K562 (cell line): ENCODE measurements at regions of chr3 and their contacts with region 1.

Region 1: GRCh38 chr3:184174646-184175492 is at the start of gene AP2M1:
- DNase-seq: peak; percentile 86 to 98 (median 92)
- ATAC-seq: peak; percentile 88
- H3K4me3 ChIP-seq: peak within 1 kb of the TSS; percentile 81
- H3K27ac ChIP-seq: peak within 1 kb of the TSS; percentile 82
- H3K4me1 ChIP-seq: peaks cover 41 to 56% of the 10 kb centered on the region in 2 experiments; a peak in 4 of 5 replicates
- H3K27me3 ChIP-seq: no peaks in the 10 kb centered on the region
- CTCF ChIP-seq: no peak
- EP300 ChIP-seq: no peak
- POLR2A ChIP-seq: peak; percentile 88
- RAD21 ChIP-seq: no peak
- polyA plus RNA-seq, gene AP2M1: 118 to 252 TPM

Region 2: GRCh38 chr3:184135149-184135910 is 39.5 kb before region 1 on chr3 and contains the start of gene EIF2B5:
- CTCF ChIA-PET with region 1: no interaction called
- POLR2A ChIA-PET with region 1: interaction called, 4 read pairs
- in situ Hi-C with region 1: no loop called
- intact Hi-C with region 1: loop called (anchors 5 kb)
- DNase-seq: peak; percentile 90 to 96 (median 92)
- ATAC-seq: peak; percentile 90
- H3K4me3 ChIP-seq: peak within 1 kb of the TSS; percentile 97
- H3K27ac ChIP-seq: peak within 1 kb of the TSS; percentile 92
- H3K4me1 ChIP-seq: peaks cover 7 to 13% of the 10 kb centered on the region in 2 experiments; a peak in 4 of 5 replicates
- H3K27me3 ChIP-seq: no peaks in the 10 kb centered on the region; a peak in 1 of 5 replicates
- CTCF ChIP-seq: peak; percentile 29 to 49 (median 31); a peak in 5 of 6 replicates
- EP300 ChIP-seq: peak; percentile 51
- POLR2A ChIP-seq: peak; percentile 92
- RAD21 ChIP-seq: peak; percentile 20 to 28; a peak in 3 of 4 replicates
- polyA plus RNA-seq, gene EIF2B5: 19.1 to 31.8 TPM

Region 3: GRCh38 chr3:184154885-184155643 is 19.8 kb before region 1 on chr3 and contains the start of gene DVL3:
- CTCF ChIA-PET with region 1: no interaction called
- POLR2A ChIA-PET with region 1: interaction called, 27 read pairs
- in situ Hi-C with region 1: no loop called
- intact Hi-C with region 1: loop called (anchors 2 kb)
- DNase-seq: peak; percentile 75 to 93 (median 91)
- ATAC-seq: peak; percentile 82
- H3K4me3 ChIP-seq: peak within 1 kb of the TSS; percentile 71
- H3K27ac ChIP-seq: peak within 1 kb of the TSS; percentile 88
- H3K4me1 ChIP-seq: peaks cover 22 to 23% of the 10 kb centered on the region in 2 experiments; a peak in 4 of 5 replicates
- H3K27me3 ChIP-seq: no peaks in the 10 kb centered on the region
- CTCF ChIP-seq: no peak
- EP300 ChIP-seq: no peak
- POLR2A ChIP-seq: peak; percentile 51; the same call in 1 of the 2 replicates
- RAD21 ChIP-seq: no peak
- polyA plus RNA-seq, gene DVL3: 3.1 to 5.4 TPM

Region 4: GRCh38 chr3:184185461-184186308 is 10.8 kb after region 1 on chr3 and contains the start of gene ABCF3:
- CTCF ChIA-PET with region 1: no interaction called
- POLR2A ChIA-PET with region 1: interaction called, 20 read pairs
- in situ Hi-C with region 1: no loop called
- intact Hi-C with region 1: no loop called
- DNase-seq: peak; percentile 96 to 99 (median 96)
- ATAC-seq: peak; percentile 96
- H3K4me3 ChIP-seq: peak within 1 kb of the TSS; percentile 92
- H3K27ac ChIP-seq: peak within 1 kb of the TSS; percentile 93
- H3K4me1 ChIP-seq: peaks cover 17 to 32% of the 10 kb centered on the region in 2 experiments
- H3K27me3 ChIP-seq: no peaks in the 10 kb centered on the region
- CTCF ChIP-seq: 0 out of 6 replicates have a peak, but pooled peaks of 1 of the 3 experiments have one; percentile 0
- EP300 ChIP-seq: peak; percentile 66; the same call in 1 of the 2 replicates
- POLR2A ChIP-seq: peak; percentile 82
- RAD21 ChIP-seq: peak in 1 of 2 experiments; percentile 36; a peak in 1 of 4 replicates
- polyA plus RNA-seq, gene ABCF3: 6.7 to 23.7 TPM

Region 5: DNA sequence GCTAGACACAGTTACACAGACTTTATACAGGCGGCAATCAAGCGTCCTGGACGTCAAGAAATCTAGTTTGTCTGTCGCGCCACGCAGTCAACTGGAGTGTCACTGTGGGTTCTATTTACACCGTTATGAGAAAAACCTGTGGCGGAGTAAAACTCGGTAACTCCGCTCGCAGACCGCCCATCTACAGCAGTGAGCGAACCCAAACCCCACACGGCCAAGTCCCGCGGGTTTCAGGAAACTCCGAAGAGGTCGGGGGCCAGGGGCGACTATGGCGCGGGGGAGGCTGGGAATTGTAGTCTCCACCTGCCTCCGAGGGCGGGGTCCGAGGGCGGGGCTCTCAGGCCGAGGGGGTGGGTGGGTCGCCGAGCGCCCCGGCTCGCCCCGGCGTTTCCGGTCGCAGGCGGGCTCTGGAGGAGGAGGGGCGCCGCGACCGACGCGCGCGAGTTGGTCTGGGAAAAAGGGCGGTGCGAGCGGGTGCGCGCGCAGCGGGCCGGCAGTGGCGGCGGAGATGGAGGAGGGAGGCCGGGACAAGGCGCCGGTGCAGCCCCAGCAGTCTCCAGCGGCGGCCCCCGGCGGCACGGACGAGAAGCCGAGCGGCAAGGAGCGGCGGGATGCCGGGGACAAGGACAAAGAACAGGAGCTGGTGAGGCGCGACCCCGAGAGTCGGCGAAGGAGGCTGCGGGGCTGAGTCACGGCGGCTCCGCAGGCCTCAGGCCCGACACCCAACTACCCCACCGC is 124.1 kb after region 1 on chr3 and contains the start of gene PSMD2:
- CTCF ChIA-PET with region 1: no interaction called
- POLR2A ChIA-PET with region 1: no interaction called
- in situ Hi-C with region 1: no loop called
- intact Hi-C with region 1: loop called (anchors 5 kb)
- DNase-seq: peak; percentile 97 to 99 (median 98)
- ATAC-seq: peak; percentile 98
- H3K4me3 ChIP-seq: peak within 1 kb of the TSS; percentile 84
- H3K27ac ChIP-seq: peak within 1 kb of the TSS; percentile 88
- H3K4me1 ChIP-seq: peaks cover 7 to 9% of the 10 kb centered on the region in 2 experiments; a peak in 4 of 5 replicates
- H3K27me3 ChIP-seq: no peaks in the 10 kb centered on the region
- CTCF ChIP-seq: no peak
- EP300 ChIP-seq: no peak
- POLR2A ChIP-seq: peak; percentile 91
- RAD21 ChIP-seq: no peak
- polyA plus RNA-seq, gene PSMD2: 152 to 173 TPM

Region 6: DNA sequence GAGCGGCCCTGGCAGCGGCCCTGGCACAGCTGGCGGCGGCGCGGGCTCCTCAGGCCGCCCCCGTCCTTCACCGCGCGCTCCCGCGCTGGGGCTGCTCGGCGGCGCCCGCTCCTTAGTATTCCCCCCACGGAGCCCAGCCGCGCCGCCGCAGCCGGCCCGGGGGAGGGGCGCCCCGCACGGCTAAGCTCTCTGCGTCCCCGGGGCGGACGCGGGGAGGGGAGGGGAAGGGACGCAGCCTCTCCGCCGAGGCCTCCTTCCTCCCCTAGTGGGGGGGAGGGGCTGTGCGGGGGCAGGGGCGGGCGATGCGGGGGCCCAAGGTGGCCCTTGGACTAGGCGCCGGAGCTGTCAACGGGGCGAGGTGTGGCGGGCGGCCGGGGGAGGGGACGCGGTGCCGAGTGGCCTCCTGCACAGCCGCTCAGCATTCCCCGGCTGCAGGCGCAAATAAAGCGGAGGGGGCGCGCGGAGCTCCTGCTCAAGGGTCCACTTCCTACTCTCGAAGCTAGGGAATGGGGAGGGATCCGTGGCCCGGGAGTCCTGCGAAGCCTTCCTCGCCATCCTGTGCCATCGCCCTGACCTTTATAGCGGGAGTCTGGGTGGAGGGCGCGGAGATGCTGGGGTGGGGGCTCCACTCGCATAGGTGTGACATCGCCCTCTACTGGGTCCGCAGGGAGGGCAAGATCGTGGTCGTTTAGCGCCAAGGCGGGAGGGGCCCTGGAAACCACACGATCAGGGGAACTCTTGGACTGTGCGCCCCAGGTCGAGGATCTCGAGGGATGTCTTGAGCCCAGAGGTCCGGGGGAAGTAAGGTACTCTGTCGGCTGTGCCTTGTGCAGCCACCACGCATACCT is 408.9 kb after region 1 on chr3:
- CTCF ChIA-PET with region 1: no interaction called
- POLR2A ChIA-PET with region 1: no interaction called
- in situ Hi-C with region 1: no loop called
- intact Hi-C with region 1: no loop called
- DNase-seq: peak in 3 of 4 experiments; percentile 13 to 59 (median 52)
- ATAC-seq: peak; percentile 56
- H3K4me3 ChIP-seq: no peak overlapping the region
- H3K27ac ChIP-seq: no peak overlapping the region
- H3K4me1 ChIP-seq: peaks cover 0 to 14% of the 10 kb centered on the region in 2 experiments; a peak in 2 of 5 replicates
- H3K27me3 ChIP-seq: peaks cover 40 to 81% of the 10 kb centered on the region in 2 experiments
- CTCF ChIP-seq: peak in 2 of 3 experiments; percentile 23 to 39; a peak in 3 of 6 replicates
- EP300 ChIP-seq: no peak
- POLR2A ChIP-seq: no peak
- RAD21 ChIP-seq: no peak